GM18951 (cell line): ENCODE measurements at regions of chr9 and their contacts with region 1.

Region 1: DNA sequence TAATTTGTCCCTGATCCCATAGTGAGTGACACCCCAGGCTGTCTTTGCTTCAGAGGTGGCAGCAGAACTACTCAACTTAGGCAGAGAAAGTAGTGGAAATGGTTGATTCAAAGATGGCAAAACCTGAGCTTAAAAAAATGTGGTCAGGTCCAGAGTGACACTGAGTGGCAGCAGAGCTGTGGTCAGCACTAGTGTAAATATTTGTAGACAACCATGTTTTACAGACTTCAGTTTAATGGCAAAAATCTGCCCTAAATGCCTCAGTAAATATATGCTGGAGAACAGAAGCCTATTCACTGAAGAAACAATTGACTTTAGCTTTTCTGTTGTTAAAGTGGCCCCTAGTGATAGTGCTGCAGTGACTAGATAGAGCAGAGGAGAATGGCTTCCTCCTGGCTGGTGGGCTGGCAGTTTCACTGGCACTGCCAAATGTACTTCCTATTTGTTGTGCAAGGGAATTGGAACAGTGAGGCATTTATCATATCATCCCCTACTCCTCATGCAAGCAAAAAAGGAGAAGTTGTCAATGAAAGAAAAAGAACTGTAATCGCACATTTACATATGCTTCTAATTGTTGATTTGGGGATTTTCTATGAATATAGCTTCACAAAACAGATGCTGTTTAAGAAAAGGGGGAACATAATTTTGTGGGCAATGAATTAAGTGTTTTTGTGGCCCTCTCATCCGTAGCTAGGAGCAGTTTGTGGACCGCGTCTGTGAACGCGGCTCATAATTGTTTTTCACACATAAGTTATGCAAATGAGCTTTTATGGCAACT is 12.0 kb downstream of the PBX3 start:
- POLR2A ChIP-seq: no peak

Region 2: GRCh38 chr9:125631391-125632085 is 127.6 kb before region 1 on chr9:
- in situ Hi-C with region 1: loop called (anchors 25 kb)
- POLR2A ChIP-seq: no peak